ENCODE measurements at regions of chrX and their contacts with region 1.

Region 1: DNA sequence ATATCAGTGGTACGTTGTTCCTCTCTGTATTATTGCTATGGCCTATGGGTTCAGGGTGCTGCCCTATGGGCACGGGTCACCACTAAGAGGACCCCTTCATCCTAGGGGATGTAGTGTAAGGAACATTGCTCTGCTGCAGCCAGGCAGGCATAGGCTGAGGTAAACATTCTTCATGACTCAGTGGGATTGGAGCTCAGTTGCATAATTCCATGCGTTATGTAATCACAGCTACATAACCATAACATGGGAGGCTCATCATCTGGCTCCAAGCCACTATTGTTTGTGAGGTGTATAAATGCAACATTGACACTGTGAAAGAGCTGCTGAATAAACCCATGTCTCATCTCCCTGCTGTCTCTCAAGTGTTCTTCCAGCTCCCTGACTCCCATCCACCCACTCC is 375.2 kb downstream of the MAGEE1 start:
- DNase-seq: no peak
- H3K4me3 ChIP-seq: no peak overlapping the region
- H3K27ac ChIP-seq: no peak overlapping the region
- H3K4me1 ChIP-seq: no peaks in the 10 kb centered on the region
- H3K27me3 ChIP-seq: no peaks in the 10 kb centered on the region
- CTCF ChIP-seq: no peak
- EP300 ChIP-seq: no peak
- POLR2A ChIP-seq: no peak

Region 2: DNA sequence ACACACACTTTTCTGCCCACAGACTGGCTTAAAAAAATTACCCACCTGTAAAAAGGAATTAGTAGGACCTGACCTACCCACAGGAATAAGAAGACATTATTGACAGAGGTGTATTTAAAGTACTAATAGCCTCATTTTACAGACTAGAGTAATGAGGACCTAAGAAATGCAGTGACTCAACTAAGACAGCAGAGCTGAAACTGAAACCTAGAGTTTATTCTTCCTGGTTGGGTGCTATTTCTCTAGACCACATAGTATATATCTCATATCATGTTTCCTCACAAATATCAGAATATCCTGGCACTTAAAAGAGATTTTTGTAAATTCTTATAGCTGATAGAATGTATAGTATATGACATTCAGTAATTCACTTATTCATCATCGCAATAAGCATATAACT is 59.8 kb after region 1 on chrX:
- in situ Hi-C with region 1: no loop called
- intact Hi-C with region 1: loop called (anchors 10 kb)
- DNase-seq: no peak
- H3K4me3 ChIP-seq: no peak overlapping the region
- H3K27ac ChIP-seq: no peak overlapping the region
- H3K4me1 ChIP-seq: no peaks in the 10 kb centered on the region
- H3K27me3 ChIP-seq: no peaks in the 10 kb centered on the region
- CTCF ChIP-seq: no peak
- EP300 ChIP-seq: no peak
- POLR2A ChIP-seq: no peak

Measured in transverse colon (tissue), 4 donors.